OCI-LY7 (cell line): ENCODE measurements at regions of chr7 and their contacts with region 1.

Region 1: GRCh38 chr7:28375729-28376128 is 36.6 kb upstream of the CREB5 start:
- DNase-seq: no peak
- H3K4me3 ChIP-seq: no peak overlapping the region
- H3K27ac ChIP-seq: no peak overlapping the region
- H3K4me1 ChIP-seq: no peaks in the 10 kb centered on the region
- CTCF ChIP-seq: no peak

Region 2: GRCh38 chr7:27834179-27834921 is 541.4 kb before region 1 on chr7:
- CTCF ChIA-PET with region 1: no interaction called
- POLR2A ChIA-PET with region 1: interaction called, 10 read pairs
- intact Hi-C with region 1: no loop called
- DNase-seq: no peak
- H3K4me3 ChIP-seq: no peak overlapping the region
- H3K27ac ChIP-seq: no peak overlapping the region
- H3K4me1 ChIP-seq: no peaks in the 10 kb centered on the region
- CTCF ChIP-seq: no peak

Region 3: GRCh38 chr7:28280516-28280915 is 95.2 kb before region 1 on chr7:
- CTCF ChIA-PET with region 1: no interaction called
- POLR2A ChIA-PET with region 1: no interaction called
- intact Hi-C with region 1: no loop called
- DNase-seq: no peak
- H3K4me3 ChIP-seq: no peak overlapping the region
- H3K27ac ChIP-seq: no peak overlapping the region
- H3K4me1 ChIP-seq: no peaks in the 10 kb centered on the region
- CTCF ChIP-seq: no peak